ENCODE measurements at regions of chrX and their contacts with region 1.

Region 1: GRCh38 chrX:139902562-139902961 is 30.3 kb downstream of the ATP11C start:
- DNase-seq: no peak
- H3K4me3 ChIP-seq: no peak overlapping the region
- H3K4me3 Mint-ChIP-seq: no peak overlapping the region
- H3K27ac Mint-ChIP-seq: peak overlapping the region; percentile 63
- H3K4me1 ChIP-seq: peaks cover 28% of the 10 kb centered on the region
- H3K4me1 Mint-ChIP-seq: peaks cover 27% of the 10 kb centered on the region
- H3K27me3 ChIP-seq: no peaks in the 10 kb centered on the region
- H3K27me3 Mint-ChIP-seq: no peaks in the 10 kb centered on the region
- CTCF ChIP-seq: no peak

Region 2: DNA sequence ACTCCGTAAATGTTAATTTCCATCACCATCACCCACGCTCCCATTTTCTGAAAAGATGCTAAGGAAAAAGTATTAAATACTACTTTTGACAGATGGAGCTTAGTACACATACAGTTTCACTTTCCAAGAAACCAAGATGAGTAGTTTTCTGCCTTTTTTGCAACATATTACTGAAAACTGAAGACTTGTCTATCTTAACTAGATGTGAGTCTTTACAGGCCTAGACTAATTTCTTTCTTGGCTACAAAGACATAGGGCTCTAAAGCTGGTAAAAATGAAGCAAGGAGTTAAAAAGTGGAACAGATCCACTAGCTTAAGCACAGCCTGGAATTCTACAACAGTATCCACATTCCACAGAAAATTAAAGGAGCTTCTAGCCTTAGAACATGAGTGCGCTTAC is 37.9 kb before region 1 on chrX:
- CTCF ChIA-PET with region 1: no interaction called
- POLR2A ChIA-PET with region 1: no interaction called
- intact Hi-C with region 1: loop called (anchors 5 kb)
- DNase-seq: no peak
- H3K4me3 ChIP-seq: no peak overlapping the region
- H3K4me3 Mint-ChIP-seq: no peak overlapping the region
- H3K27ac Mint-ChIP-seq: no peak overlapping the region
- H3K4me1 ChIP-seq: no peaks in the 10 kb centered on the region
- H3K4me1 Mint-ChIP-seq: peaks cover 6% of the 10 kb centered on the region
- H3K27me3 ChIP-seq: no peaks in the 10 kb centered on the region
- H3K27me3 Mint-ChIP-seq: no peaks in the 10 kb centered on the region
- CTCF ChIP-seq: no peak

Region 3: GRCh38 chrX:139932901-139933796 is 30.6 kb after region 1 on chrX and contains the start of gene ATP11C:
- CTCF ChIA-PET with region 1: interaction called, 8 read pairs
- POLR2A ChIA-PET with region 1: no interaction called
- intact Hi-C with region 1: loop called (anchors 2 kb)
- DNase-seq: peak; percentile 83 to 90
- H3K4me3 ChIP-seq: peak within 1 kb of the TSS; percentile 79
- H3K4me3 Mint-ChIP-seq: peak within 1 kb of the TSS; percentile 92
- H3K27ac Mint-ChIP-seq: peak within 1 kb of the TSS; percentile 95
- H3K4me1 ChIP-seq: no peaks in the 10 kb centered on the region
- H3K4me1 Mint-ChIP-seq: no peaks in the 10 kb centered on the region
- H3K27me3 ChIP-seq: no peaks in the 10 kb centered on the region
- H3K27me3 Mint-ChIP-seq: no peaks in the 10 kb centered on the region
- CTCF ChIP-seq: no peak
- total RNA-seq, gene ATP11C: 12.2 and 15.3 TPM in 2 replicates